ENCODE measurements at regions of chr1 and their contacts with region 1.

Region 1: GRCh38 chr1:183881387-183882131 is 76.6 kb downstream of the RGL1 start:
- DNase-seq: peak; percentile 65 to 76 (median 69)
- ATAC-seq: peak; percentile 44 to 90 (median 78)
- H3K4me3 ChIP-seq: no peak overlapping the region
- H3K27ac ChIP-seq: peak overlapping the region in 11 of 12 donors; percentile 5 to 80 (median 41)
- H3K4me1 ChIP-seq: peaks cover 9 to 93% (median 47%) of the 10 kb centered on the region in 12 donors
- H3K27me3 ChIP-seq: no peaks in the 10 kb centered on the region
- CTCF ChIP-seq: no peak
- POLR2A ChIP-seq: no peak

Region 2: GRCh38 chr1:183792300-183792699 is 89.3 kb before region 1 on chr1:
- intact Hi-C with region 1: no loop called
- DNase-seq: no peak
- ATAC-seq: no peak
- H3K4me3 ChIP-seq: no peak overlapping the region
- H3K27ac ChIP-seq: no peak overlapping the region
- H3K4me1 ChIP-seq: peaks cover 0 to 24% (median 3%) of the 10 kb centered on the region in 12 donors
- H3K27me3 ChIP-seq: no peaks in the 10 kb centered on the region
- CTCF ChIP-seq: no peak
- POLR2A ChIP-seq: no peak

Region 3: GRCh38 chr1:183834568-183834967 is 47.0 kb before region 1 on chr1:
- intact Hi-C with region 1: loop called in 1 of 10 experiments (anchors 5 kb)
- DNase-seq: no peak
- ATAC-seq: peak in 2 of 4 donors; percentile 45 to 78
- H3K4me3 ChIP-seq: no peak overlapping the region
- H3K27ac ChIP-seq: peak overlapping the region in 2 of 12 donors; percentile 16 to 19
- H3K4me1 ChIP-seq: peaks cover 0 to 82% (median 17%) of the 10 kb centered on the region in 12 donors
- H3K27me3 ChIP-seq: no peaks in the 10 kb centered on the region
- CTCF ChIP-seq: no peak
- POLR2A ChIP-seq: no peak

Region 4: GRCh38 chr1:183989078-183989577 is 107.6 kb after region 1 on chr1:
- intact Hi-C with region 1: no loop called
- DNase-seq: peak in 4 of 5 donors; percentile 39 to 63 (median 48)
- ATAC-seq: peak; percentile 49 to 87 (median 81)
- H3K4me3 ChIP-seq: no peak overlapping the region
- H3K27ac ChIP-seq: peak overlapping the region in 5 of 12 donors; percentile 0 to 61 (median 38)
- H3K4me1 ChIP-seq: peaks cover 0 to 49% (median 20%) of the 10 kb centered on the region in 12 donors
- H3K27me3 ChIP-seq: no peaks in the 10 kb centered on the region
- CTCF ChIP-seq: no peak
- POLR2A ChIP-seq: no peak